AG04449 (cell line): ENCODE measurements at regions of chr17 and their contacts with region 1.

Region 1: GRCh38 chr17:76014184-76014924 is 12.8 kb downstream of the EVPL start:
- DNase-seq: no peak
- H3K4me3 ChIP-seq: no peak overlapping the region
- CTCF ChIP-seq: peak; percentile 92

Region 2: GRCh38 chr17:75904749-75905521 is 109.4 kb before region 1 on chr17 and contains the start of gene MRPL38:
- CTCF ChIA-PET with region 1: interaction called, 276 read pairs
- POLR2A ChIA-PET with region 1: no interaction called
- DNase-seq: peak; percentile 40
- H3K4me3 ChIP-seq: peak within 1 kb of the TSS; percentile 75
- CTCF ChIP-seq: peak; percentile 95

Region 3: DNA sequence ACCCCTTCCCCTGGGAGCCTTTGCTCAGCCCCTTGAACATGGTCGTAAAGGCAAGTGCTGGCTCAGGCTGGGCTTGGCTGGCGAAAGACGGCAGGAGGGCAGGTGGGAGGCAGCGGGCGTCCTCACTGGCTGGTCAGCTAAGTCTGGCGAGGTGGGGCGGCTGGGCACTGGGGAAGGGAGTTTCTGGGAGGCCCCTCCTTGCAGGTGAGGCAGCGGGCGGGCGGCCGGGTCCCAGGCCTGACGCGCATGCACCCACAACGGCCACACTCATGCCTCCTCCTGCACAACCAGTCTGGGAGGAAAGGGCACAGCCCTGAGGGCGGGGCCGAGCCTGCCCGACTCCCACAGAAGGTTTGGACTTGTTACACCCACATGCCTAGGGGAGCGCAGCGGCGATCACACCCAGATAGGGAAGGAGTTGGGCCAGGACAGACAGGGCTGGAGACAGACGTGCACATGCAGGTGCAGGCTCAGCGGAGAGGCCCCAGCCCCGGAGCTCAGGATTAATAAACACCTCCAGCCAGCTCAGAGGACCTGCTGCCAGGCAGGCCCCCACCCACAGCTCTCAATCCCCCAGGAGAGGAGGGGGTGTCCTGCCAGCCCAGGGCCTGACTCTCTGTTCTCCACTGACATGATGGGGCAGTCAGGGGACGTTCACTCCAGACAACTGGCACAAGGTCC is 12.9 kb after region 1 on chr17 and contains the start of gene EVPL:
- CTCF ChIA-PET with region 1: interaction called, 50 read pairs
- POLR2A ChIA-PET with region 1: no interaction called
- DNase-seq: no peak
- H3K4me3 ChIP-seq: no peak within 1 kb of the TSS
- CTCF ChIP-seq: no peak

Region 4: DNA sequence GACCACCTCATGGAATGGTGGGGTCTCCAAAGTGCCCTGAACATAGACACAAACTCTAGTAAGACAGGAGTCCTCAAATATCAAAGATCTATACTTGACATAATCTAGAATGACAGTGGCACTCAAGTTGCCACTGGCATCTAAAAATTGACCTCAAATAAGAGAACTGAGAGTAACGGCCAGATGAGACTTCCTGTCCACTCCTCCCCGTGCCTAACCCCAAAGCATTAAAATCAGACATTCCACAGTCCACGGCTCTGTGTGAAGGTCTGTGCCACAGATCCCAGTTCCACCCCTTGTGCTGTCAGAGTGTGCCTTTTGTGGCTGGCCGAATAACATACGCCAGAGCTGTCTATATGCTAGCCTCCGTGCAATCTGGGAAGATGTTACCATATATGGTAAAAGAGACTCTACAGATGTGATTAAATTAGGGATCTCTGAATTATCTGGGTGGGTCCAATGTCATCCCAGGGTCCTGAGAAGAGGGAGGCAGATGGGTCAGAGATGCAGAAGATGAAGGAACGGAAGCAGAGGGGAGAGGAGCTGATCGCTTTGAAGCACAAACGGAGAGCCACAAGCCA is 33.8 kb after region 1 on chr17:
- CTCF ChIA-PET with region 1: interaction called, 12 read pairs
- POLR2A ChIA-PET with region 1: no interaction called
- DNase-seq: no peak
- H3K4me3 ChIP-seq: no peak overlapping the region
- CTCF ChIP-seq: no peak

Region 5: GRCh38 chr17:76103274-76104139 is 89.2 kb after region 1 on chr17 and contains the start of gene EXOC7:
- CTCF ChIA-PET with region 1: interaction called, 15 read pairs
- POLR2A ChIA-PET with region 1: no interaction called
- DNase-seq: peak; percentile 16
- H3K4me3 ChIP-seq: peak within 1 kb of the TSS; percentile 92
- CTCF ChIP-seq: peak; percentile 10

Region 6: DNA sequence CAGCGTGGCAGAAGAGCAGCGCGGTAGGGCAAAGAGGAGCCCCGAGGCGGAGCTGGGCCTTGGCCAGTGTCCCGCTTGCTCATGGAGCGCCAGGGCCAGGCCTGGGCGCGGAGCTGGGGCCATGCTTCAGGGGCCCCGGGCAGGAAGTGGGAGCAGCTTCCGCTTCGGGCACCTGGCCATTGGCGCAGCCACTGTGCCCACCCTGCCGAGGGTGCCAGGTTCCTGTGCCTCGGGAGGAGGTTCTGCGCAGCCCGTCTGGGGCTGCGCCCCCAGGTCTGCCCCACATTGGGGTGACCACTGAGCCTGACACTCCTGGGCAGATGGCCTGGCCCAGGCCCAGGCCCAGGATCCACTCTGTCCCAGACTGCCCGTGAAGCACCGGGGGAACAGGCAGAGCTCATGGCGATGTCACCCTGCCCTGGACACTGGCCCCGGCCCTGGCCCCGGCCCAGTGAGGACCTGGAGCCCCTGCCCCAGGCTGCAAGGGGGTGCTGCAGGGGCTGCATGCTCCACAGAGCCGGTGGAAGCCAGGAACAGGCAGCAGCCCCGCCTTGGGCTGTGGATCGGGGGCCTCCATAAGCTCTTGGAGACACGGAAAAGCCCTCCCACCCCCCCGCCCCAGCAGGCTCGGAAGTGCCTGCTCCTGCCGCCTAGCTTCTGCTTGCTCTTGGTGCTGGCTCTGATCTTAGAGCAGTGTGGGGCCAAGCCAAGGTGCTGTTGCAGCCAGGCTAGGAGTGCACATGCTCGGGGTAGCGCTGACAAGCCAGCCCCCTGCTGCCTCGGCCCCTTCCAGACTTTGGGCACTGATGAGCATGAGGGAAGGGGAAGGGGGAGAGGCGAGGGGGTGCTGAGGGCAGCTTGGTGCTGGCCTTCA is 162.6 kb after region 1 on chr17:
- CTCF ChIA-PET with region 1: interaction called, 46 read pairs
- POLR2A ChIA-PET with region 1: no interaction called
- DNase-seq: no peak
- H3K4me3 ChIP-seq: no peak overlapping the region
- CTCF ChIP-seq: no peak

Region 7: GRCh38 chr17:76278952-76279741 is 264.8 kb after region 1 on chr17:
- CTCF ChIA-PET with region 1: interaction called, 113 read pairs
- POLR2A ChIA-PET with region 1: no interaction called
- DNase-seq: peak; percentile 14
- H3K4me3 ChIP-seq: no peak overlapping the region
- CTCF ChIP-seq: peak; percentile 94